Endothelial cell of umbilical vein (primary cell): ENCODE measurements at regions of chr10 and their contacts with region 1.

Region 1: GRCh38 chr10:70146489-70147258 is at the start of gene TYSND1:
- DNase-seq: peak; percentile 98
- H3K4me3 ChIP-seq: peak within 1 kb of the TSS; percentile 58 to 64 (median 64)
- H3K27ac ChIP-seq: peak within 1 kb of the TSS; percentile 45
- H3K4me1 ChIP-seq: peaks cover 11% of the 10 kb centered on the region
- H3K27me3 ChIP-seq: no peaks in the 10 kb centered on the region
- CTCF ChIP-seq: peak; percentile 66 to 87
- POLR2A ChIP-seq: peak; percentile 91
- total RNA-seq, gene TYSND1: 6.7 and 7.8 TPM in 2 replicates

Region 2: DNA sequence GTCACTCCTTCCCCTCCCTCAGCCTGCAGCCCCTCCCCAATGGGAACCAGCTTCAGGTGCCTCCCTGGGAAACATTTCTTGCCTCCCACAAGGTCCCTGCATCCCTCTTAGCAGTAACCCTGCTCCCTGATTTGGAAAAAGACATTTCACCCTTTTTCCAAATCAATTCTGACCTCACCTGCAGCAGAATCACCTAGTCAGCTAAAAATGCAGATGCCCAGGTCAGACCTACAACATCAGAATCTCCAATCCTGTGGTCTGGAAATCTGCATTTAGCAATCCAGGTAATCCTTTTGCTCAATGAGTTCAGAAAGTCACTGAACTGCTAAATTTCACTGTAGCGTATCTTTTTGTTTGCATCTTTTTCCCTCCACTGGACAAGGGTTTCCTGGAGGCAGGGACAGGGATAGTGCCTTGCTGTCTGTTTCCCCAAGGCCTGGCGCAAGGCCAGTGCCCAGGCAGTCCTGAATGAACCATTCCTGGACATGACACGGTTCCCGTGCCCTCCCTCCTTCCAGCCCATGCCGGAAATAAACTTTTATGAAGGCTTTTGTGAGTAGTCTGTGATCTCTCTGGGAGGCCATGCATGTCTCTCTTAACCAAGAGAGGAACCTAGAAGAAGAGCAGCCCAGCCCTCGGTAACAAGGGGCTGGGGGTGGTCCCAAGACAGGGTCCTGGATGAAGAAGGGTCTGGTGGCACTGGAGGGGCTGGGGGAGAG is 300.9 kb before region 1 on chr10:
- CTCF ChIA-PET with region 1: no interaction called
- POLR2A ChIA-PET with region 1: no interaction called
- dilution Hi-C with region 1: no loop called
- intact Hi-C with region 1: no loop called
- DNase-seq: peak; percentile 81
- H3K4me3 ChIP-seq: peak overlapping the region in 1 of 3 experiments; percentile 6
- H3K27ac ChIP-seq: peak overlapping the region; percentile 78
- H3K4me1 ChIP-seq: peaks cover 43% of the 10 kb centered on the region
- H3K27me3 ChIP-seq: no peaks in the 10 kb centered on the region
- CTCF ChIP-seq: no peak
- POLR2A ChIP-seq: no peak

Region 3: GRCh38 chr10:69957886-69958555 is 188.7 kb before region 1 on chr10:
- CTCF ChIA-PET with region 1: interaction called, 13 read pairs
- POLR2A ChIA-PET with region 1: no interaction called
- dilution Hi-C with region 1: no loop called
- intact Hi-C with region 1: no loop called
- DNase-seq: peak; percentile 43
- H3K4me3 ChIP-seq: no peak overlapping the region
- H3K27ac ChIP-seq: no peak overlapping the region
- H3K4me1 ChIP-seq: no peaks in the 10 kb centered on the region
- H3K27me3 ChIP-seq: no peaks in the 10 kb centered on the region
- CTCF ChIP-seq: peak; percentile 85 to 90
- POLR2A ChIP-seq: no peak

Region 4: GRCh38 chr10:70132098-70133029 is 14.3 kb before region 1 on chr10 and contains the start of gene AIFM2:
- CTCF ChIA-PET with region 1: interaction called, 12 read pairs
- POLR2A ChIA-PET with region 1: interaction called, 6 read pairs
- dilution Hi-C with region 1: no loop called
- intact Hi-C with region 1: loop called (anchors 1 kb)
- DNase-seq: peak; percentile 38
- H3K4me3 ChIP-seq: peak within 1 kb of the TSS; percentile 58 to 77 (median 75)
- H3K27ac ChIP-seq: peak within 1 kb of the TSS; percentile 60
- H3K4me1 ChIP-seq: peaks cover 13% of the 10 kb centered on the region
- H3K27me3 ChIP-seq: no peaks in the 10 kb centered on the region
- CTCF ChIP-seq: no peak
- POLR2A ChIP-seq: no peak
- total RNA-seq, gene AIFM2: 6.6 and 8.7 TPM in 2 replicates

Region 5: GRCh38 chr10:70169649-70170364 is 23.1 kb after region 1 on chr10:
- CTCF ChIA-PET with region 1: interaction called, 9 read pairs
- POLR2A ChIA-PET with region 1: interaction called, 24 read pairs
- dilution Hi-C with region 1: no loop called
- intact Hi-C with region 1: loop called (anchors 1 kb)
- DNase-seq: peak; percentile 50
- H3K4me3 ChIP-seq: peak overlapping the region; percentile 72 to 96 (median 85)
- H3K27ac ChIP-seq: peak overlapping the region; percentile 90
- H3K4me1 ChIP-seq: peaks cover 20% of the 10 kb centered on the region
- H3K27me3 ChIP-seq: no peaks in the 10 kb centered on the region
- CTCF ChIP-seq: no peak
- POLR2A ChIP-seq: no peak

Region 6: DNA sequence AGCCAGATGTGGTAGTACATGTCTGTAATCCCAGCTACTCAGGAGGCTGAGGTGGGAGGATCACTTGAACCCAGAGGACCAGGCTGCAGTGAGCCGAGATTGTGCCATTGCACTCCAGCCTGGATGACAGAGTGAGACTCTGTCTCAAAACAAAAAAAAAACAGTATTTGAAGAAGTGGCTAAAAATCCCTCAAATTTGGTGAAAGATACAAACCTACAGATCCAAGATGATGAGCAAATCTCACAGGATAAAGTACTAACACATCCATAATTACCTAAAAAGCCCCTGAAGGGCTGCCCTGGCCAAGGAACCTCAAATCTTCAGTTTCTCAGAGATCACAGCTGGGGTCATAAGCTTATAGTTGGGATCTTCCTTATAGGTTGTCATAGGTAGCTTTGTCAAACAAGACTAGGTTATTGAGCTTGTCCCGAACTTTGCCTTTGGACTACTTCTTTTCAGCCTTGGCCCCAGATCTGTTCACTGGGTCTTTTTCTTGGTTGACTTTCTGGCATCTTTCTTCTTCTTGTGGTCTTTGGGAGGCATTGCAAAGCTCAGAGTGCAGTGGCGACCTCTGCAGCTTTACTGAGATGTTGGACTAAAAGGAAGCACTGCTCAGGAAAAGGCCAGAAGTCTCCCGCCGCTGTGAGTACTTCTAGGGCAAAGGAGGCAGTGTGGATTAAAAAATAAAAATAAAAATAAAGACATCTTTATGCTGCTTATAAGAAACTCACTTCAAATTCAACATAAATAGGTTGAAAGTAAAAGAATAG is 52.2 kb after region 1 on chr10:
- CTCF ChIA-PET with region 1: interaction called, 11 read pairs
- POLR2A ChIA-PET with region 1: interaction called, 6 read pairs
- dilution Hi-C with region 1: no loop called
- intact Hi-C with region 1: loop called (anchors 5 kb)
- DNase-seq: no peak
- H3K4me3 ChIP-seq: no peak overlapping the region
- H3K27ac ChIP-seq: no peak overlapping the region
- H3K4me1 ChIP-seq: no peaks in the 10 kb centered on the region
- H3K27me3 ChIP-seq: no peaks in the 10 kb centered on the region
- CTCF ChIP-seq: no peak
- POLR2A ChIP-seq: no peak

Region 7: DNA sequence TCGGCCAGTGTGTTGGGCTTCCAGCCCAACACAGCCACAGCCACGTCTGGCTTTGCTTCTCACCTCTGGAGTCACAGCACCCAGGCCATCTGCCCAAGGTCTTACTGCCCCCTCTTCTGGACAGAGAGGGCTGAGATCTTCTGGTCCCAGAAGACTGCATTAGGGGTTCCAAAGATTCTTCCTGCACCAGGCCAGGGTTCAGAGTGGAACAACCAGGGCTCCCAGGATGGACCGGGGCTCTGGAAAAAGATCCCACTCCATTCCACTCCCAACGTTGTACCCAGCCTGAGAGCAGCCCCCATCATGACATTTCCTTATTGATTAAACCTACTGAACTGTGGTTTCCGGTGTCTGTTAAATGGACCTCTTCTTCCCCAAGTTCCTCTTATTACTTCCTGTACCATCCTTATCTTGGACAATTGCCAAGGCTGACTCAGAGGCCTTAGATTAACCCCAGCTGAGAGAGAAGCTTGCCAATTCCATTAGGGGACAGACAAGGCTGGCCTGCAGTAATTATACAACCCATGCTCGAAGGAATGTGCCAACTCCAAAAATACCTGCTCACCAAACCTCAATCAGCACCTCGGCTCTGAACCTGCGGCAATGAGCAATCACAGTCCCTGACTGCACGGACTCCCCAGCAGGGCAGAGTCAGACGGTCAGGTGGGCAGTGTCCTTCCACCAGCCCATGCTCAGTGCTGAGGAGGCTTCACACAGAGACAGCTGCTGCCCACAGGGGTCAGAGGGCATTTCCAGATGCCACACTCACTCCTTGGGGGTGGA is 185.0 kb after region 1 on chr10:
- CTCF ChIA-PET with region 1: no interaction called
- POLR2A ChIA-PET with region 1: no interaction called
- dilution Hi-C with region 1: no loop called
- intact Hi-C with region 1: no loop called
- DNase-seq: peak; percentile 71
- H3K4me3 ChIP-seq: no peak overlapping the region
- H3K27ac ChIP-seq: no peak overlapping the region
- H3K4me1 ChIP-seq: peaks cover 8% of the 10 kb centered on the region
- H3K27me3 ChIP-seq: peaks cover 22 to 26% of the 10 kb centered on the region in 2 experiments
- CTCF ChIP-seq: peak in 1 of 2 donors; percentile 11
- POLR2A ChIP-seq: no peak

Region 8: DNA sequence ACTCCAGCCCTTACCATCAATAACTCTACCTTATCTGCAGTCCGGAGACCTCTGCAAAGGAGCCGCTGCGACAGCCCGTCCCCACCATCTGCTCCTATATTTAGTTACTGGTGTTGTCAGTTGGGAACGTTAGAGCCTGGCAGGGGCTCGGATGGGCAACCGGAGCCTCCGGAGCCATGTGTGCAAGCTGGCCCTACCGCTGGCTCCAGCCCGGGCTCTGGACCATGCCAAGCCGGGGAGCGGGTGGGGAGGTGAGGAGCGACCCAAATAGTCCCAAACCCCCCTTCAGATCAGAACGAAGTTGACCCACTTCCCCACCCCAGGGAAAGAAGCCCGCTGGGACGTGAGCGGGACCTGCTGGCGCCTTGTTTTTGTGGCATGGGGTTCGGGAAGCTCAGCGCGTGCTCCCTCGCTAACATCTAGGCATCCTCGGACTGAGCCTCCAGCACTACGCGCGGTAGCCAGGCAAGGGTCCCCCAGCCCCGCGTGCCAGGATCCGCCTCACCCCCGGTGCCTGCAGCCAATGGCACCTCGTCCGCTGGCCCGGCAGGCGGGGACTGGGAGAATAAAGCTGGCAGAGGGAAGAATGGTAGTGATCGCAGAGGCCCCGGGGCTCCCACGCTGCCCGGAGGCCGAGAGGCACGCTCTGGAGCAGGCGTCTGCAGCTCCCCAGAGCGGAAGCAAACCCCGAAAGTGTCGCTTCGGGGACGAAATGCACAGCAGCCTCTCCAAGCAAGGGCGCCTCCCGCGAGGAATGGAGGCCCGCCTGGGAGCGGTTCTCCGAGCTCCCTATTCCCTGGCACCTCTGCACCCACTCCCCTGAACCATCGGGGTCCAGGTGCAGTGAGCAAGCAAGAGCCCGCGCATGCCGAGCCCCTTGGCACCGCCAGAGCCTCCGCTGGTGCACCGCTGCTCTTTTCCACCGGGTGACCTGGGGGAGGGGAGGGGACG is 235.1 kb after region 1 on chr10:
- CTCF ChIA-PET with region 1: interaction called, 3 read pairs
- POLR2A ChIA-PET with region 1: no interaction called
- dilution Hi-C with region 1: no loop called
- intact Hi-C with region 1: loop called (anchors 5 kb)
- DNase-seq: peak; percentile 55
- H3K4me3 ChIP-seq: peak overlapping the region; percentile 51 to 88 (median 82)
- H3K27ac ChIP-seq: peak overlapping the region; percentile 41
- H3K4me1 ChIP-seq: peaks cover 32% of the 10 kb centered on the region
- H3K27me3 ChIP-seq: peaks cover 0 to 3% of the 10 kb centered on the region in 2 experiments
- CTCF ChIP-seq: no peak
- POLR2A ChIP-seq: peak; percentile 57